ENCODE measurements at regions of chr18 and their contacts with region 1.

Region 1: DNA sequence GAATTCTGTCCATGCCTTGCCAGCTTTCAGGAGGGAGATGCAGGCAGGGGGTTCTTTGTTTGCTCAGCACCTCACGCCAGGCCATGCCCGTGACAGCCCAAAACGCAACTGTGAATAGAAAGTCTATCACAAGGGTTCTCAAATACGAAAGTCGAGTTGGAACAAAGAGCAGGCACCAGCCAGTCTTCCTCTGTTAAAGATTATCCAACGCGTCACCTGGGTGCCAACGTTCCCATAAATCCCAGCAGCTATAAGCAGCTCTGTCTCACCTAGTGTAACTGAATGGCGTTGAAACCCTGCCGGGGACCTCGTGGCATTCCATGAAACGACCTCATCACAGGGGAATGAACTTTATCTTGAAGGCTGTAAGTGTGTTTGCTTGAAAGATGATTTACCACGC is 84.8 kb upstream of the GATA6 start:
- DNase-seq: no peak
- ATAC-seq: no peak
- H3K4me3 ChIP-seq: no peak overlapping the region
- H3K27ac ChIP-seq: no peak overlapping the region
- H3K4me1 ChIP-seq: no peaks in the 10 kb centered on the region
- H3K27me3 ChIP-seq: no peaks in the 10 kb centered on the region

Region 2: DNA sequence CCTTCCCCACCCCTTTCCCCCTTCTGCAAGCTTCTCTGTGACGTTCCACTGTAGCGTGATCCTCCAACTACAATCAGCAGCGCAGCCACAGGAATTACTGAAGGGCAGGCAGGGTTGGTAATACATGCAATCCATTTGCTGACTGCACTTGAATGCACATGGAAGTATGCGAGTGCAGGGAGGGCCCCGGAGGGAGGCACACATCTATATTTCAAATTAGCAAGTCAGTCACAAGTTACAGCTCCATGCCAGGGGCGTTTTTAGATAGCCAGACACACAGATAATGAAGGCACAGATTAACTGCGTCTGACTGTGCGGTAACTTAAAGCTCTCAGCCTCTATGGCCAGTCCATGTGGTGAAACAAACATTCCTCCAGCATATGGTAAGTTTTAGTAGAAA is 124.4 kb before region 1 on chr18:
- intact Hi-C with region 1: no loop called
- DNase-seq: no peak
- ATAC-seq: no peak
- H3K4me3 ChIP-seq: no peak overlapping the region
- H3K27ac ChIP-seq: no peak overlapping the region
- H3K4me1 ChIP-seq: no peaks in the 10 kb centered on the region
- H3K27me3 ChIP-seq: no peaks in the 10 kb centered on the region

Region 3: GRCh38 chr18:22658318-22658717 is 573.8 kb after region 1 on chr18:
- intact Hi-C with region 1: loop called in 1 of 2 experiments (anchors 5 kb)
- DNase-seq: no peak
- ATAC-seq: no peak
- H3K4me3 ChIP-seq: no peak overlapping the region
- H3K27ac ChIP-seq: no peak overlapping the region
- H3K4me1 ChIP-seq: no peaks in the 10 kb centered on the region
- H3K27me3 ChIP-seq: no peaks in the 10 kb centered on the region